Dorsolateral prefrontal cortex (tissue), 120 donors: ENCODE measurements at regions of chr1 and their contacts with region 1.

Region 1: DNA sequence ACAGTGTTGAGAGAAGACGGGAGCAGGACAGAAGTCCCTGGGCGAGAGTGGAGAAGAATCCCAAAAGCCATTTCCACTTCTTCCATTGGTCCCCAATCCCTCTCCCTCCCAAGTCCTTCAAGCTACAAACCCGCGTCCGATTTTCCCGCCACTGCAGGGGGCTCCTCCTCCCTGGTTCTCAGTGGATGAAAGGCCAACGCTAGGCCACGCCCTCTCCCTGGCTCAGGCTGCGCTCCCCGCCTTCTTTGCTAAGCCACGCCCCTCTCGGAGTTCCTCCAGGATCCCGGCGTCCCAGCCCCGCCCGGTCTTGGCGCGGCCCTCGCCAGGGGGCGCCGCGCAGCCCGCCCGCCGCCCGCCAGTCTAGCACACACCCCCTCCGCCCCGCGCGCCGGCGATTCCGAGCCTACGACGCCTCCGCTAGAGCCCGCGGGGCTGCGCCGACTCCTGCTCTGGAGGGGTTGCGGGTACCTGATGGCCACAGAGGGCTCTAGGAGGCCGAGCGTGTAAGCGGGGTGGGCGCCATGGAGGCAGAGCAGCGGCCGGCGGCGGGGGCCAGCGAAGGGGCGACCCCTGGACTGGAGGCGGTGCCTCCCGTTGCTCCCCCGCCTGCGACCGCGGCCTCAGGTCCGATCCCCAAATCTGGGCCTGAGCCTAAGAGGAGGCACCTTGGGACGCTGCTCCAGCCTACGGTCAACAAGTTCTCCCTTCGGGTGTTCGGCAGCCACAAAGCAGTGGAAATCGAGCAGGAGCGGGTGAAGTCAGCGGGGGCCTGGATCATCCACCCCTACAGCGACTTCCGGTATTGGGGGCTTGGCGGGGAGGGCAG is at the start of gene HCN3:
- DNase-seq: peak; percentile 97 to 99 (median 98)
- H3K4me3 ChIP-seq: peak within 1 kb of the TSS; percentile 48 to 94 (median 82)
- H3K27ac ChIP-seq: peak within 1 kb of the TSS in 54 of 59 donors; percentile 0 to 90 (median 73)
- H3K27me3 ChIP-seq: no peaks in the 10 kb centered on the region
- CTCF ChIP-seq: peak in 55 of 56 donors; percentile 53 to 95 (median 79)
- total RNA-seq, gene HCN3: 6.0 to 24.1 (median 11.7) TPM

Region 2: GRCh38 chr1:155308493-155309422 is 31.5 kb after region 1 on chr1 and contains the start of gene FDPS:
- intact Hi-C with region 1: loop called (anchors 2 kb)
- DNase-seq: peak; percentile 99 to 100 (median 100)
- H3K4me3 ChIP-seq: peak within 1 kb of the TSS; percentile 61 to 100 (median 86)
- H3K27ac ChIP-seq: peak within 1 kb of the TSS; percentile 74 to 98 (median 94)
- H3K27me3 ChIP-seq: no peaks in the 10 kb centered on the region
- CTCF ChIP-seq: peak in 42 of 56 donors; percentile 9 to 67 (median 41)
- total RNA-seq, gene FDPS: 72.8 to 199 (median 118) TPM